GM12878 (cell line): ENCODE measurements at regions of chr9 and their contacts with region 1.

Region 1: GRCh38 chr9:110954822-110955291 is 83.4 kb downstream of the LPAR1 start:
- DNase-seq: no peak
- ATAC-seq: peak; percentile 54
- H3K4me3 ChIP-seq: no peak overlapping the region
- H3K27ac ChIP-seq: no peak overlapping the region
- H3K4me1 ChIP-seq: peaks cover 8% of the 10 kb centered on the region
- H3K27me3 ChIP-seq: no peaks in the 10 kb centered on the region
- CTCF ChIP-seq: no peak
- EP300 ChIP-seq: peak in 1 of 2 experiments; percentile 61; a peak in 1 of 4 replicates
- POLR2A ChIP-seq: no peak
- RAD21 ChIP-seq: no peak

Region 2: DNA sequence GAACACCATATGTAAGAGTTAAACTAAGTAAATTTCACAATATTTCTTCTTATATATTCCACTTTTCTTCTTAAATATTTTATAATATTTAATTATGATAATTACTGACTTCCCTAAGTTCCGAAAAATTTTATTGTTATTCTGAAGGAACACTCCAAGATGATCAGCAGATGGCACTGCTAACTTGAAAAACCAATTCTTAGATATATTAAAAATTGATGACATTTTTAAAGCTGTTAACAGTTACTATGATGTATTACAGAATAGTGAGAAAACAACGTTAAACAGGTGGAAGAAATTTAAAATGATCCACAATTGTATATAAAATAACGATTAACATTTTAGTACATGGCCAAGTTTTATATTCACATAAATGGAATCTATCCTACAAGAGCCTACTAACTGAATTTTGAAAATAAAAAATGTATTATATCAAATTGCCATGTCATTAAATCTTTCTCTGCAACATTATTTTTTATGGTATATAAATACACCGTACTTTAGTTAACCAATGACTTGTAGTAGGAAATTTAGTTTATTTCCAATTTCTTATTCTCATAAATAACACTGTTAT is 316.4 kb before region 1 on chr9:
- CTCF ChIA-PET with region 1: interaction called, 4 read pairs
- POLR2A ChIA-PET with region 1: no interaction called
- RAD21 ChIA-PET with region 1: interaction called, 11 read pairs
- SMC1A ChIA-PET with region 1: interaction called, 4 read pairs
- in situ Hi-C with region 1: no loop called
- intact Hi-C with region 1: no loop called
- DNase-seq: no peak
- ATAC-seq: peak; percentile 43; the same call in 1 of the 3 replicates
- H3K4me3 ChIP-seq: no peak overlapping the region
- H3K27ac ChIP-seq: no peak overlapping the region
- H3K4me1 ChIP-seq: no peaks in the 10 kb centered on the region
- H3K27me3 ChIP-seq: no peaks in the 10 kb centered on the region
- CTCF ChIP-seq: peak in 2 of 3 experiments; percentile 11 to 21; a peak in 3 of 6 replicates
- EP300 ChIP-seq: no peak
- POLR2A ChIP-seq: no peak
- RAD21 ChIP-seq: peak; percentile 81

Region 3: GRCh38 chr9:110900917-110901316 is 53.9 kb before region 1 on chr9:
- CTCF ChIA-PET with region 1: no interaction called
- POLR2A ChIA-PET with region 1: no interaction called
- RAD21 ChIA-PET with region 1: no interaction called
- SMC1A ChIA-PET with region 1: no interaction called
- in situ Hi-C with region 1: no loop called
- intact Hi-C with region 1: no loop called
- DNase-seq: no peak
- ATAC-seq: no peak
- H3K4me3 ChIP-seq: no peak overlapping the region
- H3K27ac ChIP-seq: no peak overlapping the region
- H3K4me1 ChIP-seq: no peaks in the 10 kb centered on the region
- H3K27me3 ChIP-seq: no peaks in the 10 kb centered on the region
- CTCF ChIP-seq: no peak
- EP300 ChIP-seq: no peak
- POLR2A ChIP-seq: no peak
- RAD21 ChIP-seq: no peak

Region 4: DNA sequence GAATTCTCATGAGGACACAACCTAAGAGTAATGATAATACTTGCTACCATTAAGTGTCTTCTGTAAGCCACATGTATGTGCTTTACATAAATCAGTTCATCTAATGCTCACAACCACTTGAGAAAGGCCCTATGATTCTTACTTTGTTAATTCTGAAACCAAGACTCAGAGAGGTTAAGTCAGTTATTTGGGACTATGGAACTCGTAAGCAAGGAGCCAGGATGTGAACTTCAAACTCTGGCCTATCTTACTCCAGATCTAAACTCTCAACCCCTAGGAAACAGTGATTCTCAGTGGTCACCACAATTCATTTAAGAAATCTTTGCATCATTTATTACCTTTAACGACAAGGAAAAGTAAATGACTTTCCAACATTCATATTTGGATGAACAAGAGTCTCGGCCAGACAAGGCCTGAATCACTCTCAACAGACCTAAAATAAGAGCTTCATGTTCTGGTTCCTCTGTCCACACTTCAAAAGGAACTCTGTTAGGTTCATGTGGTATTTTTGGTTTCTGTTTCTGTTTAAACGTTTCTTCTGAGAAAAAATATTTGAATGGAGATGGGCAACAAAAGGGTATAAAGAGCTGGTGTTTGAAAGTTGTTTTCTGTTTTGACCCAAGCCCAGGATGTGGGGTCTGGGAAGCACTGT is 21.4 kb before region 1 on chr9:
- CTCF ChIA-PET with region 1: interaction called, 15 read pairs
- POLR2A ChIA-PET with region 1: interaction called, 5 read pairs
- RAD21 ChIA-PET with region 1: interaction called, 33 read pairs
- SMC1A ChIA-PET with region 1: interaction called, 29 read pairs
- in situ Hi-C with region 1: no loop called
- intact Hi-C with region 1: no loop called
- DNase-seq: peak; percentile 41
- ATAC-seq: peak; percentile 80
- H3K4me3 ChIP-seq: peak overlapping the region; percentile 5; the same call in 1 of the 2 replicates
- H3K27ac ChIP-seq: peak overlapping the region; percentile 47
- H3K4me1 ChIP-seq: peaks cover 10% of the 10 kb centered on the region
- H3K27me3 ChIP-seq: no peaks in the 10 kb centered on the region
- CTCF ChIP-seq: no peak
- EP300 ChIP-seq: 0 out of 4 replicates have a peak, but pooled peaks of 1 of the 2 experiments have one; percentile 15
- POLR2A ChIP-seq: no peak
- RAD21 ChIP-seq: no peak

Region 5: GRCh38 chr9:110971234-110971633 is 16.4 kb after region 1 on chr9:
- CTCF ChIA-PET with region 1: interaction called, 6 read pairs
- POLR2A ChIA-PET with region 1: interaction called, 4 read pairs
- RAD21 ChIA-PET with region 1: interaction called, 7 read pairs
- SMC1A ChIA-PET with region 1: interaction called, 11 read pairs
- in situ Hi-C with region 1: no loop called
- intact Hi-C with region 1: no loop called
- DNase-seq: no peak
- ATAC-seq: no peak
- H3K4me3 ChIP-seq: no peak overlapping the region
- H3K27ac ChIP-seq: no peak overlapping the region
- H3K4me1 ChIP-seq: no peaks in the 10 kb centered on the region
- H3K27me3 ChIP-seq: no peaks in the 10 kb centered on the region
- CTCF ChIP-seq: no peak
- EP300 ChIP-seq: no peak
- POLR2A ChIP-seq: no peak
- RAD21 ChIP-seq: no peak

Region 6: GRCh38 chr9:110986529-110986928 is 31.7 kb after region 1 on chr9:
- CTCF ChIA-PET with region 1: no interaction called
- POLR2A ChIA-PET with region 1: interaction called, 3 read pairs
- RAD21 ChIA-PET with region 1: interaction called, 6 read pairs
- SMC1A ChIA-PET with region 1: interaction called, 11 read pairs
- in situ Hi-C with region 1: no loop called
- intact Hi-C with region 1: no loop called
- DNase-seq: no peak
- ATAC-seq: no peak; the same call in 1 of the 3 replicates
- H3K4me3 ChIP-seq: no peak overlapping the region
- H3K27ac ChIP-seq: no peak overlapping the region
- H3K4me1 ChIP-seq: no peaks in the 10 kb centered on the region
- H3K27me3 ChIP-seq: no peaks in the 10 kb centered on the region
- CTCF ChIP-seq: no peak
- EP300 ChIP-seq: no peak
- POLR2A ChIP-seq: no peak
- RAD21 ChIP-seq: no peak

Region 7: GRCh38 chr9:110996436-110997220 is 41.8 kb after region 1 on chr9:
- CTCF ChIA-PET with region 1: no interaction called
- POLR2A ChIA-PET with region 1: interaction called, 4 read pairs
- RAD21 ChIA-PET with region 1: interaction called, 13 read pairs
- SMC1A ChIA-PET with region 1: interaction called, 15 read pairs
- in situ Hi-C with region 1: no loop called
- intact Hi-C with region 1: no loop called
- DNase-seq: no peak
- ATAC-seq: no peak
- H3K4me3 ChIP-seq: no peak overlapping the region
- H3K27ac ChIP-seq: no peak overlapping the region
- H3K4me1 ChIP-seq: peaks cover 6% of the 10 kb centered on the region
- H3K27me3 ChIP-seq: no peaks in the 10 kb centered on the region; a peak in 1 of 4 replicates
- CTCF ChIP-seq: no peak
- EP300 ChIP-seq: no peak
- POLR2A ChIP-seq: no peak
- RAD21 ChIP-seq: no peak

Region 8: DNA sequence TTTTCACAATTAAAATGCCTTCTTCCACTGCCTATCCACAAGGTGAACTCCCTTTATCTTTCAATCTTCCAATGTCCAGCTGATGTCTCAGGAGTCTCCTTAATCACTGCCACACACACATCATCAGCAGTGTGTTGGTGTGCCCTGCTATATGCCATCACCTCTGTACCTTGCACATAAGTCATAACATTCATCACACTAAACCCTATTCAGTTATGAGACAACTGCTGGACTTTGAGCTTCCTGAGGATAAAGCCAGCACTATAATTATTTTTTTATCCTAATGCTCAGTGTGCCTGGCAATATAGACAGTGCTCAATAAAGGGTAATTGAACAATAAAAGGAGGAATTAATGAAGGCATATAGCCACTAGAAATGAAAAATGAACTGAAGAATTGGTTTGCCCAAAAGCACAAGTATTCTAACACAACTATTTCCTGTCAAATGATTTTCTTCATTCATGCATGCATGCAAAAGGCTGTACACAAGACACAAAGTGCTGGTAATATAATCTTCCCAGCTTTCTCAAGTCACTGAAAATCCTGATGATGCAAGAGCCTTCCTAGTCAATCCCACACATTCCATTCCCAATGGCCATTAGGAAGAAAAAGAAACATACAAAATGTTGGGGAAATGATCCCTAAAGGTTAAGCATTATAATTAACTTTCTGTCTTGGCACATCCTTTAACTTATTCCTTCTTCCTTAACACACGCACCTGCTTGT is 51.1 kb after region 1 on chr9:
- CTCF ChIA-PET with region 1: no interaction called
- POLR2A ChIA-PET with region 1: no interaction called
- RAD21 ChIA-PET with region 1: interaction called, 13 read pairs
- SMC1A ChIA-PET with region 1: interaction called, 6 read pairs
- in situ Hi-C with region 1: no loop called
- intact Hi-C with region 1: no loop called
- DNase-seq: no peak
- ATAC-seq: peak; percentile 59
- H3K4me3 ChIP-seq: no peak overlapping the region
- H3K27ac ChIP-seq: no peak overlapping the region
- H3K4me1 ChIP-seq: no peaks in the 10 kb centered on the region
- H3K27me3 ChIP-seq: no peaks in the 10 kb centered on the region
- CTCF ChIP-seq: no peak
- EP300 ChIP-seq: no peak
- POLR2A ChIP-seq: no peak
- RAD21 ChIP-seq: no peak

Region 9: GRCh38 chr9:111068771-111069170 is 113.9 kb after region 1 on chr9:
- CTCF ChIA-PET with region 1: no interaction called
- POLR2A ChIA-PET with region 1: no interaction called
- RAD21 ChIA-PET with region 1: no interaction called
- SMC1A ChIA-PET with region 1: no interaction called
- in situ Hi-C with region 1: no loop called
- intact Hi-C with region 1: no loop called
- DNase-seq: no peak
- ATAC-seq: no peak
- H3K4me3 ChIP-seq: no peak overlapping the region
- H3K27ac ChIP-seq: no peak overlapping the region
- H3K4me1 ChIP-seq: peaks cover 6% of the 10 kb centered on the region
- H3K27me3 ChIP-seq: no peaks in the 10 kb centered on the region
- CTCF ChIP-seq: no peak
- EP300 ChIP-seq: no peak
- POLR2A ChIP-seq: no peak
- RAD21 ChIP-seq: no peak

Region 10: DNA sequence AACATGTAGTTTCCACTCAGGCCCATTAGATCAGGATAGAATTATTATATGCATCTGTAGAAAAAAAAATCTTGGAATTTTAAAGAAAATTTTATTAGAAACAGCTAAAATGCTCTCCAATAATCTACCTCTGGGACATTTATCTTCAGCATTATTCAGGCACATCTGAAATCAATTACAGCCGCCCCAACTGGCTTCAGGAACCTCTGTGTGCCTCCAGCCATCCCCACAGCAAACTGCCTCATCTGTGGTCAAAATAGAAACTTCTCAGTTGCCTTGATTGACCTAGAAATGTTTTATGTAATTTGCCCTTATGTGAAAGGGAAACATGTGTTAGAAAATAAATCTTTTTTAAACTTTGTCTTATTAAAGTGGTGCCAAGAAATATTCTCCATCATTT is 203.5 kb after region 1 on chr9:
- CTCF ChIA-PET with region 1: no interaction called
- POLR2A ChIA-PET with region 1: no interaction called
- RAD21 ChIA-PET with region 1: no interaction called
- SMC1A ChIA-PET with region 1: no interaction called
- in situ Hi-C with region 1: no loop called
- intact Hi-C with region 1: no loop called
- DNase-seq: no peak
- ATAC-seq: no peak
- H3K4me3 ChIP-seq: no peak overlapping the region
- H3K27ac ChIP-seq: no peak overlapping the region
- H3K4me1 ChIP-seq: no peaks in the 10 kb centered on the region; the same call in 1 of the 2 replicates
- H3K27me3 ChIP-seq: no peaks in the 10 kb centered on the region
- CTCF ChIP-seq: no peak
- EP300 ChIP-seq: no peak
- POLR2A ChIP-seq: no peak
- RAD21 ChIP-seq: no peak